Sigmoid colon (tissue), 7 donors: ENCODE measurements at regions of chr7 and their contacts with region 1.

Region 1: GRCh38 chr7:137656227-137656849 is 190.4 kb downstream of the DGKI start:
- DNase-seq: peak; percentile 89
- H3K4me3 ChIP-seq: no peak overlapping the region
- H3K27ac ChIP-seq: no peak overlapping the region
- H3K4me1 ChIP-seq: no peaks in the 10 kb centered on the region
- H3K27me3 ChIP-seq: no peaks in the 10 kb centered on the region
- CTCF ChIP-seq: peak; percentile 51 to 79 (median 73)
- EP300 ChIP-seq: no peak
- POLR2A ChIP-seq: no peak

Region 2: GRCh38 chr7:137681657-137682562 is 25.6 kb after region 1 on chr7:
- intact Hi-C with region 1: no loop called
- DNase-seq: no peak
- H3K4me3 ChIP-seq: no peak overlapping the region
- H3K27ac ChIP-seq: peak overlapping the region in 2 of 4 donors; percentile 1 to 4
- H3K4me1 ChIP-seq: no peaks in the 10 kb centered on the region
- H3K27me3 ChIP-seq: no peaks in the 10 kb centered on the region
- CTCF ChIP-seq: no peak
- EP300 ChIP-seq: no peak
- POLR2A ChIP-seq: no peak

Region 3: GRCh38 chr7:137798073-137798763 is 141.9 kb after region 1 on chr7:
- intact Hi-C with region 1: no loop called
- DNase-seq: no peak
- H3K4me3 ChIP-seq: no peak overlapping the region
- H3K27ac ChIP-seq: no peak overlapping the region
- H3K4me1 ChIP-seq: no peaks in the 10 kb centered on the region
- H3K27me3 ChIP-seq: no peaks in the 10 kb centered on the region
- CTCF ChIP-seq: no peak
- EP300 ChIP-seq: no peak
- POLR2A ChIP-seq: no peak

Region 4: GRCh38 chr7:138008547-138009349 is 352.4 kb after region 1 on chr7:
- intact Hi-C with region 1: loop called (anchors 2 kb)
- DNase-seq: no peak
- H3K4me3 ChIP-seq: no peak overlapping the region
- H3K27ac ChIP-seq: no peak overlapping the region
- H3K4me1 ChIP-seq: peaks cover 0 to 8% (median 2%) of the 10 kb centered on the region in 4 donors
- H3K27me3 ChIP-seq: no peaks in the 10 kb centered on the region
- CTCF ChIP-seq: peak; percentile 78 to 90 (median 88)
- EP300 ChIP-seq: no peak
- POLR2A ChIP-seq: no peak